A549 (cell line): ENCODE measurements at regions of chr21 and their contacts with region 1.

Region 1: GRCh38 chr21:15064576-15065391 is at the start of gene NRIP1:
- DNase-seq: peak; percentile 31 to 85
- ATAC-seq: peak; percentile 86 to 87
- H3K4me3 ChIP-seq: peak within 1 kb of the TSS; percentile 86
- H3K27ac ChIP-seq: peak within 1 kb of the TSS; percentile 97 to 100
- H3K4me1 ChIP-seq: peaks cover 15% of the 10 kb centered on the region; the same call in 2 of the 3 replicates
- CTCF ChIP-seq: no peak
- EP300 ChIP-seq: no peak
- POLR2A ChIP-seq: peak; percentile 79
- RAD21 ChIP-seq: 0 out of 5 replicates have a peak, but pooled peaks have one; percentile 2 to 10
- polyA plus RNA-seq, gene NRIP1: 35.5 and 41.7 TPM in 2 replicates

Region 2: DNA sequence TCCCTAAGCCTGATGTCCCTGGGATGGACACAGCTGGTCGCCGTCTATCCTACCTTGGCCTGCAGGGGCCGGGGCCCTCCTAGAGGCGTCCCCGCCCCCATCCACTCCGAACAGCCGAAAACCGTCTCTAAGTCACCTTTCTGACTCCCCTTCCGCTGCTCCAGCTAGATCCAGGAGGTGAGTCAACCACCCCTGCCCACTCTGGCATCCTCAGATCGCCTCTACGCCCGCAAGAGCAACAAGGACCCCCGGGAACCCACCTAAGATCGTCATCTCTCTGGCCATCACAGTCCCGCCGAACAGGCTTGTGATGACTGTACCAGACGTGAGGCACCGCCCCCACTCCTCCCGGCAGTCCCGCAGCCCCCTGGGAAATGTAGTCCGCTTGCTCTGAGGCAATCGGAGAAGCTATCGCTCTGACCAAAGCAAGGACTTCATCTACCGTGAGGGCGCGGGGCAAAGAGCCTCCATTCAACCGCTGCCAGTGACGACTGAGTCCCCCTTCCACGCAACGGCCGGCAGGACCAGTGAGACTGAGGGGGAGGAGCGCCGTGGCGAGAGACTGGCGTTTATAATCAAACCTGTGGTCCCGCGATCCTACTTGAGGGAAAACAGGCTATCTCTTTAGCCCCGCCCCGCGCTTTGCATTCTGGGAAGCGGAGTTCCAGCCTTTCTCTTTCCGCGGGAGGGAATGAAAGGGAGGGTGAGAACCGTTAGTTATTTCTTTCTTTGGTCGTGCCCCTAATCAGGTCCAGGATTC is 681.8 kb before region 1 on chr21 and contains the start of gene HSPA13:
- CTCF ChIA-PET with region 1: no interaction called
- POLR2A ChIA-PET with region 1: no interaction called
- DNase-seq: peak; percentile 83 to 98
- ATAC-seq: peak; percentile 99
- H3K4me3 ChIP-seq: peak within 1 kb of the TSS; percentile 92
- H3K27ac ChIP-seq: peak within 1 kb of the TSS; percentile 83 to 91
- H3K4me1 ChIP-seq: peaks cover 20% of the 10 kb centered on the region
- CTCF ChIP-seq: no peak
- EP300 ChIP-seq: no peak
- POLR2A ChIP-seq: peak; percentile 39
- RAD21 ChIP-seq: no peak
- polyA plus RNA-seq, gene HSPA13: 41.8 and 52.0 TPM in 2 replicates

Region 3: DNA sequence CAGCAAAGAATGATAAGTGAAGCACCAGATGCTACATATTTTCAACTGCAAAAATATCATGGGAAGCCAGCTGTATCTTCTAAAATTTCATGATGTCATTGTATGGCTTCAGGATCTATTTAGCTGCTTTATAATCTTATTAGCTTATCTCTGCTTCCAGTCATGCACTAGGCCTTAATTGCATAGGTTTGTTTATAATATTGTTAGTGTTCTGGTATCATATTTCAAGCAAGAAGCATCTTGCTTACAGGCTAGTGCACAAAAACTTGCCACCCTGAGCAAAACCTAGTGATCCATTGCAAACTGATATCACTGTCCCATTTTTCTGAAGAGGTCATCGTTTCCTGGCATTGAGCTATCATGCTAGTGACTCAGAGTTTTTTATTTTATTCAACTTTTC is 15.7 kb after region 1 on chr21:
- CTCF ChIA-PET with region 1: no interaction called
- POLR2A ChIA-PET with region 1: no interaction called
- DNase-seq: no peak
- ATAC-seq: no peak
- H3K4me3 ChIP-seq: no peak overlapping the region
- H3K27ac ChIP-seq: no peak overlapping the region
- H3K4me1 ChIP-seq: no peaks in the 10 kb centered on the region
- CTCF ChIP-seq: no peak
- EP300 ChIP-seq: no peak
- POLR2A ChIP-seq: no peak
- RAD21 ChIP-seq: no peak

Region 4: GRCh38 chr21:15121655-15122120 is 56.9 kb after region 1 on chr21:
- CTCF ChIA-PET with region 1: no interaction called
- POLR2A ChIA-PET with region 1: interaction called, 12 read pairs
- DNase-seq: peak in 1 of 2 experiments; percentile 28
- ATAC-seq: peak; percentile 79 to 85; a peak in 5 of 6 replicates
- H3K4me3 ChIP-seq: peak overlapping the region; percentile 10; the same call in 1 of the 3 replicates
- H3K27ac ChIP-seq: peak overlapping the region; percentile 75 to 85
- H3K4me1 ChIP-seq: peaks cover 23% of the 10 kb centered on the region
- CTCF ChIP-seq: no peak
- EP300 ChIP-seq: no peak
- POLR2A ChIP-seq: no peak
- RAD21 ChIP-seq: no peak

Region 5: GRCh38 chr21:15221799-15222386 is 157.1 kb after region 1 on chr21:
- CTCF ChIA-PET with region 1: interaction called, 4 read pairs
- POLR2A ChIA-PET with region 1: interaction called, 17 read pairs
- DNase-seq: peak; percentile 15 to 92
- ATAC-seq: peak; percentile 93 to 94
- H3K4me3 ChIP-seq: no peak overlapping the region
- H3K27ac ChIP-seq: peak overlapping the region; percentile 86 to 88
- H3K4me1 ChIP-seq: peaks cover 51% of the 10 kb centered on the region
- CTCF ChIP-seq: no peak
- EP300 ChIP-seq: peak; percentile 78 to 88; a peak in 3 of 5 replicates
- POLR2A ChIP-seq: no peak
- RAD21 ChIP-seq: peak; percentile 10 to 55; a peak in 4 of 5 replicates

Region 6: GRCh38 chr21:15445327-15445726 is 380.5 kb after region 1 on chr21:
- CTCF ChIA-PET with region 1: no interaction called
- POLR2A ChIA-PET with region 1: interaction called, 10 read pairs
- DNase-seq: no peak
- ATAC-seq: no peak
- H3K4me3 ChIP-seq: no peak overlapping the region
- H3K27ac ChIP-seq: peak overlapping the region; percentile 93 to 96
- H3K4me1 ChIP-seq: peaks cover 54% of the 10 kb centered on the region
- CTCF ChIP-seq: no peak
- EP300 ChIP-seq: no peak
- POLR2A ChIP-seq: no peak
- RAD21 ChIP-seq: no peak